ENCODE measurements at regions of chr17 and their contacts with region 1.

Region 1: DNA sequence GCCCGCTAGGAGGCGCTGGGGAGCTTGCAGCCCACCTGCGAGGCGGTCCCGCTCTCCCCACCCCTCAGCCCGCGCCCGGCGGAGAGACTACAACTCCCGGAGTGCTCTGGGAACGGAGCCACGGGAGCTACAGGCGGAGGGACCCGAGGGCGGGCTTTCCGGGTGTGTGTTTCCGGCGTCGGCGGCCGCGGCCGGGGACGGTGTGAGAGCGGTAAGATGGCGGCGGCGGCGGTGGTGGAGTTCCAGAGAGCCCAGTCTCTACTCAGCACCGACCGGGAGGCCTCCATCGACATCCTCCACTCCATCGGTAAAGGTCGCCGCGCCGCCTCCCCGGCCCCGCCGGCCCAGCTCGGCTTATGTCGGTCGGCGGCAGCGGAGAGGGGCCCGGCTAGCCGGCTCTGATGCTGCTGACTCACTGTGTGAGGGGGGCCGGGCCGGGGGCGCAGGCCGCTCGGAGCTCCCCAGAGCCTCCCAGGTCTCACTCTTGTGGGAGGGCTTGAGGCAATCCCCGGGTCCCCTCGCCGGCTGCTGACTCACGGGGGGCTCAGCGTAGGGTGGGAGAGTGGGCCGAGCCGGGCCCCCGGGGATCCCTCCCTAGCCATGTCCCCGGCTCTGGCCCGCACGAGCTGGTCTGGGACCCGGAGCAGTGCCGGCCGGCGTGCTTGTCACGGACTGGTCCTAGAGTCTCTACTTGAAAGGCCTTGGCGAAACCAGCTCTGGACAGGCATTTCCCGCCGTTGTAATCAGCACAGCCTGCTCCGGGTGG is at the start of gene PSMD11:
- DNase-seq: peak; percentile 98 to 99 (median 99)
- ATAC-seq: peak; percentile 97
- H3K4me3 ChIP-seq: peak within 1 kb of the TSS; percentile 92
- H3K4me3 Mint-ChIP-seq: peak within 1 kb of the TSS; percentile 90
- H3K27ac ChIP-seq: peak within 1 kb of the TSS; percentile 46 to 63
- H3K27ac Mint-ChIP-seq: peak within 1 kb of the TSS; percentile 18
- H3K4me1 ChIP-seq: peaks cover 17% of the 10 kb centered on the region
- H3K4me1 Mint-ChIP-seq: peaks cover 39% of the 10 kb centered on the region
- H3K27me3 ChIP-seq: no peaks in the 10 kb centered on the region
- H3K27me3 Mint-ChIP-seq: no peaks in the 10 kb centered on the region
- CTCF ChIP-seq: peak; percentile 23
- total RNA-seq, gene PSMD11: 67.6 to 68.7 TPM

Region 2: GRCh38 chr17:31931756-31932155 is 512.7 kb before region 1 on chr17:
- CTCF ChIA-PET with region 1: no interaction called
- POLR2A ChIA-PET with region 1: no interaction called
- intact Hi-C with region 1: loop called in 1 of 2 experiments (anchors 10 kb)
- DNase-seq: no peak
- ATAC-seq: no peak
- H3K4me3 ChIP-seq: no peak overlapping the region
- H3K4me3 Mint-ChIP-seq: no peak overlapping the region
- H3K27ac ChIP-seq: no peak overlapping the region
- H3K27ac Mint-ChIP-seq: no peak overlapping the region
- H3K4me1 ChIP-seq: peaks cover 6% of the 10 kb centered on the region
- H3K4me1 Mint-ChIP-seq: no peaks in the 10 kb centered on the region
- H3K27me3 ChIP-seq: no peaks in the 10 kb centered on the region
- H3K27me3 Mint-ChIP-seq: no peaks in the 10 kb centered on the region
- CTCF ChIP-seq: no peak

Region 3: GRCh38 chr17:32275060-32276042 is 169.1 kb before region 1 on chr17:
- CTCF ChIA-PET with region 1: no interaction called
- POLR2A ChIA-PET with region 1: no interaction called
- intact Hi-C with region 1: no loop called
- DNase-seq: peak in 2 of 14 experiments; percentile 51 to 64
- ATAC-seq: no peak
- H3K4me3 ChIP-seq: no peak overlapping the region
- H3K4me3 Mint-ChIP-seq: no peak overlapping the region
- H3K27ac ChIP-seq: no peak overlapping the region
- H3K27ac Mint-ChIP-seq: no peak overlapping the region
- H3K4me1 ChIP-seq: peaks cover 3% of the 10 kb centered on the region
- H3K4me1 Mint-ChIP-seq: no peaks in the 10 kb centered on the region
- H3K27me3 ChIP-seq: peaks cover 3 to 8% of the 10 kb centered on the region in 2 experiments
- H3K27me3 Mint-ChIP-seq: peaks cover 40% of the 10 kb centered on the region
- CTCF ChIP-seq: no peak

Region 4: GRCh38 chr17:32349854-32350665 is 94.4 kb before region 1 on chr17 and contains the start of gene ZNF207:
- CTCF ChIA-PET with region 1: interaction called, 6 read pairs
- POLR2A ChIA-PET with region 1: interaction called, 16 read pairs
- intact Hi-C with region 1: loop called (anchors 1 to 5 kb)
- DNase-seq: peak; percentile 90 to 98 (median 93)
- ATAC-seq: peak; percentile 97
- H3K4me3 ChIP-seq: peak within 1 kb of the TSS; percentile 91
- H3K4me3 Mint-ChIP-seq: peak within 1 kb of the TSS; percentile 95
- H3K27ac ChIP-seq: peak within 1 kb of the TSS; percentile 98 to 99
- H3K27ac Mint-ChIP-seq: peak within 1 kb of the TSS; percentile 95
- H3K4me1 ChIP-seq: peaks cover 44% of the 10 kb centered on the region
- H3K4me1 Mint-ChIP-seq: peaks cover 41% of the 10 kb centered on the region
- H3K27me3 ChIP-seq: no peaks in the 10 kb centered on the region
- H3K27me3 Mint-ChIP-seq: no peaks in the 10 kb centered on the region
- CTCF ChIP-seq: no peak
- total RNA-seq, gene ZNF207: 252 to 262 TPM